Panc1 (cell line): ENCODE measurements at regions of chr3 and their contacts with region 1.

Region 1: DNA sequence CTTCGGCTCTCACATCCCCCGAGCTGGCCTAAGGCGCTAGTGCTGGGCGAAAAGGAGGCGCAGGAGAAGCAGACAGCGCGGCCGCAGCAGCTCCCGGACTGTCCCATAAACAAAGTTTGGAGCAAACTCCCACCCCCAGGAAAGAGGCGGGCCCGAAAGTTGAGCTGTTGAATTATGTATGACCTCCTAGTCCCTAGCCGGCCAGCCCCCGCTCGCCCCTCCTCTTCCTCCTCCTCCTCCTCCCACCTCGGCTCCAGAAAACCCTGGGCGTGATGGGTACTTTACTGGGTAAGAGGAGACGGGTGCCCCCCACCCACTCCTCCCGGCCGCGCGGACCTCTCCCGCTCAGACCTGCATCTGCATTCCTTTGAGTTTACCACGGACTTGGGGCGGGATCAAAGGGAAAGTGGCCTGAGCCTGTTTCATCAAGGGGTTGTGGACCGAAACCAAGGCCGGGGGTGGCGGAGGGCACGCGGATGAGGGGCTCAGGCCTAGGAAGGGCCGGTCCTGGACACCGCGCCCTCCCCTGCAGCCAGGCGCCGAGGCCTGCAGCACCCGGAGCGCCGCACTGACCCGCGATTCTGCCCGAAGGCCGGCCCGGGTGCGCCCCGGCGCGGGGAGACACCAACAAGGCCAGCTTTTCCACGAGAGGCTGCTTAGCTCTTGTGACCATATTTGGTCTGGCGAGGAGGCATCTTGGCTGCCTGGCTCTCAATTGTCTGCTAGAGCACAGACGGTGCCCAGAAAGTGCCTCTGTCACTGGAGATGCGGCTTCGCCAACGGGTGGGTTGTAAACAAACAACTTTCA is at the start of gene WWTR1:
- DNase-seq: peak; percentile 91
- ATAC-seq: peak; percentile 84
- H3K4me3 ChIP-seq: peak within 1 kb of the TSS; percentile 85 to 87
- H3K27ac ChIP-seq: peak within 1 kb of the TSS; percentile 91
- H3K4me1 ChIP-seq: peaks cover 45% of the 10 kb centered on the region
- H3K27me3 ChIP-seq: no peaks in the 10 kb centered on the region
- CTCF ChIP-seq: no peak
- total RNA-seq, gene WWTR1: 298 TPM

Region 2: GRCh38 chr3:148477375-148477774 is 1180.8 kb before region 1 on chr3:
- CTCF ChIA-PET with region 1: no interaction called
- POLR2A ChIA-PET with region 1: no interaction called
- in situ Hi-C with region 1: no loop called
- intact Hi-C with region 1: no loop called
- DNase-seq: no peak
- ATAC-seq: no peak
- H3K4me3 ChIP-seq: no peak overlapping the region
- H3K27ac ChIP-seq: no peak overlapping the region
- H3K4me1 ChIP-seq: no peaks in the 10 kb centered on the region
- H3K27me3 ChIP-seq: no peaks in the 10 kb centered on the region
- CTCF ChIP-seq: no peak

Region 3: DNA sequence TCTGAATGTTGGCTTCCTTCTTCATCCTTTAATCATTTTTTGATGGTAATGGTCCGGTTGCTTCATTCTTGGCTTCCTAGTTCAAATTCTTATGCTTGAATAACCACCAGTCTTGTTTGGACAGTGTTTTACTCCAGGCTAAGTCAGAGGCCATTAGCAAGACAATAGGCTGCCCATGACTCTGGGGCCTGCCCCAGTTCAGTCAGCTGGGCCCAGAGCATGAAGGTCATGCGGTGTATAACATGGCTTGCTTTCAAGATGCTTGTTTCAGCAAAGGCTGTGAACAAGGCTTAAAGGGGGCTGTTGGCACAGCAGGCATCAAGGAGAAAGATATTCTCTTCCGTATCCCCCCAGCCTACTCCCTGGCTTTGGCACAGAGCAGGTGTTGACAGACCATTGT is 338.4 kb before region 1 on chr3:
- CTCF ChIA-PET with region 1: no interaction called
- POLR2A ChIA-PET with region 1: no interaction called
- in situ Hi-C with region 1: no loop called
- intact Hi-C with region 1: no loop called
- DNase-seq: no peak
- ATAC-seq: no peak
- H3K4me3 ChIP-seq: no peak overlapping the region
- H3K27ac ChIP-seq: peak overlapping the region; percentile 73
- H3K4me1 ChIP-seq: peaks cover 22% of the 10 kb centered on the region
- H3K27me3 ChIP-seq: no peaks in the 10 kb centered on the region
- CTCF ChIP-seq: no peak

Region 4: DNA sequence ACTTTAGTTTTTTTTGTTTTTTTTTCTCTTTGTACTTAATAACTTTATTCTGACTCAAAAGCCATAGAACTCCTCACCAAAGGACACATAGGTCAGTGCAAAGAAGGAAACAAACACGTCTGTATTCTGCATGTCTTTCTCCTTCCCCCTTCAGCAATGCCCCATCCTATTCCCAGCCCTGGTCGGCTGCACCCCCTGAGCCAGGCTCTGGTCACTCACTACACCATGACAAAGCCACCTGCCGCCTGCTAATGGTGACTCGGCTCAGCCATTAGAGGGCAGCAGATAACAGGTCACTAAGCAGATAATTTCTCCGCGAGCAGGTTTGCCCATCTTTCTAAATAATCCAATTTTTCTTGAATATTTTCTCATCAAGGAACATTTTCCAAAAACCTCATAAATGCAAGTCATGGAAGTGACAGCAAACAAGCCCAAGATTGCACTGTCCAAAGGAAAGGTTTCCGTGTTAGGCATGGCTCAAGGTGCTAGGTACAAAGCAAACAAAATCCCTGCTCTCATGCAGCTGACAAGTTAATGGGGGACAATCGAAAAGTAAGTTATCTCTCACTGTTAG is 145.8 kb before region 1 on chr3:
- CTCF ChIA-PET with region 1: no interaction called
- POLR2A ChIA-PET with region 1: interaction called, 15 read pairs
- in situ Hi-C with region 1: no loop called
- intact Hi-C with region 1: no loop called
- DNase-seq: no peak
- ATAC-seq: peak; percentile 69
- H3K4me3 ChIP-seq: no peak overlapping the region
- H3K27ac ChIP-seq: peak overlapping the region; percentile 98
- H3K4me1 ChIP-seq: peaks cover 78% of the 10 kb centered on the region
- H3K27me3 ChIP-seq: no peaks in the 10 kb centered on the region
- CTCF ChIP-seq: peak; percentile 96

Region 5: GRCh38 chr3:149547938-149548668 is 110.0 kb before region 1 on chr3:
- CTCF ChIA-PET with region 1: no interaction called
- POLR2A ChIA-PET with region 1: interaction called, 4 read pairs
- in situ Hi-C with region 1: no loop called
- intact Hi-C with region 1: loop called (anchors 10 kb)
- DNase-seq: peak; percentile 67
- ATAC-seq: peak; percentile 84
- H3K4me3 ChIP-seq: peak overlapping the region in 1 of 2 experiments; percentile 35; a peak in 3 of 4 replicates
- H3K27ac ChIP-seq: peak overlapping the region; percentile 100
- H3K4me1 ChIP-seq: peaks cover 92% of the 10 kb centered on the region
- H3K27me3 ChIP-seq: no peaks in the 10 kb centered on the region
- CTCF ChIP-seq: no peak

Region 6: DNA sequence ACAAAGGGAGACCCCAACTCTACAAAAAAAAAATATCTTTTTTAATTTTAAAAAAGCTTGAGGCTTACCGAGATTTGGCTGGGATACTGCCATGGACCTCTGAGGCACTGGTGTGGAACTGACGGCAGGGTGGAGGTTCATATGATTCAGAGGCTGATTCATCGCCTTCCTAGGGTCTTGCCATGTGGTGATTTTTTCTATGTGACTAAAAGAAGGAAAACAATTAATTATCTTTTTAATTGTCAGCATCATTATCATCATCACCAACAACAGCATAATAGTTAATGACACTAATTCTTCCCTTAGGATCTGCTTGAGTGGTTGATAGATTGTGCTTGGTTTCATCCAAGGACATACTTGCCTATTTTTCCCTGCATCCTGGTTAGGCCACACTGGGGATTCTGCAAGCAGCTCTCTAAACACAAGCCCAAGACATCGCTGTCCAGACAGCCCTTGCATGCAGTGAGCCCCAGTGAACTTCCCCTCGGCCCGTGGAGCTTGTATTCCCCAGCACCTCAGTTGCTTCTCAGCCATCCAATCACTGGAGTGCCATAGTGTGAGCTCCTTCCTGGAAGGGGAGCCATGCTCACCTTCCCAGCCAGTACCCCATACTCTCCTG is 85.2 kb before region 1 on chr3:
- CTCF ChIA-PET with region 1: interaction called, 4 read pairs
- POLR2A ChIA-PET with region 1: interaction called, 5 read pairs
- in situ Hi-C with region 1: no loop called
- intact Hi-C with region 1: loop called (anchors 5 kb)
- DNase-seq: no peak
- ATAC-seq: peak; percentile 39
- H3K4me3 ChIP-seq: no peak overlapping the region
- H3K27ac ChIP-seq: peak overlapping the region; percentile 100
- H3K4me1 ChIP-seq: peaks cover 98% of the 10 kb centered on the region
- H3K27me3 ChIP-seq: no peaks in the 10 kb centered on the region
- CTCF ChIP-seq: no peak

Region 7: GRCh38 chr3:149717391-149718056 is 59.4 kb after region 1 on chr3:
- CTCF ChIA-PET with region 1: interaction called, 5 read pairs
- POLR2A ChIA-PET with region 1: interaction called, 4 read pairs
- in situ Hi-C with region 1: no loop called
- intact Hi-C with region 1: loop called (anchors 2 kb)
- DNase-seq: peak; percentile 74
- ATAC-seq: peak; percentile 86
- H3K4me3 ChIP-seq: peak overlapping the region in 1 of 2 experiments; percentile 0; a peak in 1 of 4 replicates
- H3K27ac ChIP-seq: peak overlapping the region; percentile 80
- H3K4me1 ChIP-seq: peaks cover 8% of the 10 kb centered on the region; the same call in 1 of the 2 replicates
- H3K27me3 ChIP-seq: no peaks in the 10 kb centered on the region
- CTCF ChIP-seq: peak; percentile 83